OCI-LY7 (cell line): ENCODE measurements at regions of chr7 and their contacts with region 1.

Region 1: DNA sequence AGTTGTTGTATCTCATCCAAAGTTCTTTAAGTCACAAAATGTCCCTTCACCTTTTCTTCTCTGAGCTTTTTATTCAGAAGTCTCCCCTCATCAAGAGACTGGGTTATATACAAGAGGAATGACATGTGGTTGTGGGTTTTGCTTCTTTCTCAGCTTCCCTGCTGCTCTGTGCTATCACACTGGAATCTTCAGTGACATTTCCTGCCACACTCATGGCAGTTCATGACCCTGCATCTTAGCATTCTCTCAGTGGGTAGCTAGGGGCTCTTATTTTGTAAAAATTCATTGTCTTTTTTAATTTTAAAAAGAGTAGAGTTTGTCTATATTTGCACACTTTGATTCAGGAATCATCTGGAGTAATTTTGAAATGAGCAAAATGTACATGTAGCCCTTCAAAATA is 236.9 kb upstream of the TMEM229A start:
- DNase-seq: no peak
- H3K4me3 ChIP-seq: no peak overlapping the region
- H3K27ac ChIP-seq: no peak overlapping the region
- H3K4me1 ChIP-seq: no peaks in the 10 kb centered on the region
- CTCF ChIP-seq: no peak

Region 2: GRCh38 chr7:124191713-124192112 is 78.1 kb before region 1 on chr7:
- CTCF ChIA-PET with region 1: no interaction called
- POLR2A ChIA-PET with region 1: no interaction called
- intact Hi-C with region 1: loop called (anchors 2 kb)
- DNase-seq: no peak
- H3K4me3 ChIP-seq: no peak overlapping the region
- H3K27ac ChIP-seq: no peak overlapping the region
- H3K4me1 ChIP-seq: no peaks in the 10 kb centered on the region
- CTCF ChIP-seq: no peak